Activated T-helper 2 cell treated with anti-CD3 and anti-CD28 coated beads, Interferon-gamma antibody, Interleukin-2, Interleukin-4, amounts not matched to agents 10 μg/mL and 5 μg/mL and 100 μg/mL, durations not matched to agents 14 hours and 24 hours and 36 hours (primary cell): ENCODE measurements at regions of chr9 and their contacts with region 1.

Region 1: DNA sequence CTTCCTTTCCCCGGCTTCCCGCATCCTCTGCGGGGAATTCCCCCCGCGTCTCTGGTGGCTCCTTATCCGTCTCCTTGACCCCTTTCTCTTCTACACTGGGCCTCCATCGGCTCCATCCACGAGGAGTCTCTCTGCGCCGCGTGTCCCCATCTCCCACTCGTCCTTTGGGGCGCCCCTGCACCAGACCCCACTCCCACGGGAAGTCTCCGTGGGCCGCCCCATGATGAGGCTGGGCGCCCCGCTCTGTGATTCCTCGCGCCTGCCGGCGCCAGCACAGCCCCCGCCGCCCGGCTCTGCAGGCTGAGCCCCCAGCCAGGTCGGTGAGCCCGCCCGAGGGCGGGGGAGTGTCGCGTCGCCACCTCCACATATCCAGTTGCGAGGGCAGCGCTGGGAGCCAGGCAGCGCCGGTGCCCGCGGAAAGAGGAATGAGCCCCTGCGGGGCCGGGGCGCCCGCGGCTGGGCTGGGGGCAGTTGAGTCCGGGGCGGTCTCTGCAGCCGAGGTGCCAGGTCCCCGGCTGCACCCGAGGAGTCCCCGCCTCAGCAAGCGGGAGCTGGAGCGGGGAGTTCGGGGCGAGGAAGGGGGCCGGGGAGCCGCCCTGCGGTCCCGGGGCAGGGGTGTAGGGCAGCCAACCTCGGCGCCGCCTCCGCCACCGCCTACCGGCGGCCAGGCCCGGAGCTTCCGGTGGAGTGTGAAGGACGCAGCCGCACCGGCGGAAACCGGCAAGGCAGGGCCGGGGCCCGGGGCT is 2.1 kb upstream of the TRAF1 start:
- DNase-seq: peak; percentile 81
- H3K4me3 Mint-ChIP-seq: peak overlapping the region; percentile 92
- H3K27ac Mint-ChIP-seq: peak overlapping the region; percentile 98
- H3K4me1 Mint-ChIP-seq: peaks cover 67% of the 10 kb centered on the region
- H3K27me3 Mint-ChIP-seq: no peaks in the 10 kb centered on the region

Region 2: DNA sequence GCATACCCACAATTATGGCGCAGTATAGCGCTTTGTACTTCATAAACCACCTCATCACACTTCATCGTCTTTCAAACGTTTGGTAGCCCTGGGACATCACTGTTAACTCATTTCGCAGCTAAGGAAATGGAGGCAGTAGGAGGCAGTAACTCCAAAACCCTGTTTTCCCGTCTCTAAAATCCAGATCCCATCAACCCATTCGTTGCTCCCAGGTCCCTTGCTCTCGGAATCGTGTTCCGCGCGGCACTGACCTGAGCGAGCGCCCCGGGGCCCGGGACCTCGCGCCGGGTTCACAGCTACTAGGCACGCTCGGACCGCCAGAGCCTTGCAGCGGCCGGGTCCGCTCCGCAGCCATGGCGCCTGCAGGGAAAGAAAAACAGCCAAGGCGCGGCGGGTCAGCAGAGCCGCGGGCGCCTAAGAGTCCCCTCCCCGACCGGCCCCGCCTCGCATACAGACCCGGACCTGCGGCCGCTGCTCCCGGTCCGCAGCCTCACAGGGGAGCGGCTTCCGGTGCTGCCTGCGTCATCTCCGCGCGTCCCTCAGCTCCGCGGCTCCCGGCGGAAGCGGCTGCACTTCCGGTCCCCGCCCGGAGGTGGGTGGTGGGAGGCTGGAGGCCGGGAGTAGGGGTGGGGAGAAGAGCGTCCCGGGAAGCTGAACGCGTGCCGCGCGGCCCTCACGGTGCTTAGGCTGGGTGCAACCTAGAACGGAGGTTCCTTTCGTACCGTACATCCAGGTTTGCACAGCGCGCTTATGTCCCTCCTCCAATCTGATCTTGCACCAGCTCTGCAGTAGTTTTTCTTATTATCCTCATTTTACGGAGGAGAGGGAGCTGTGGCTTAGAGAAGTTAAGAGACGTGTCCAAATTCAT is 135.5 kb before region 1 on chr9 and contains the start of gene FBXW2:
- intact Hi-C with region 1: loop called (anchors 5 kb)
- DNase-seq: peak; percentile 86
- H3K4me3 Mint-ChIP-seq: peak within 1 kb of the TSS; percentile 87
- H3K27ac Mint-ChIP-seq: peak within 1 kb of the TSS; percentile 91
- H3K4me1 Mint-ChIP-seq: peaks cover 40% of the 10 kb centered on the region
- H3K27me3 Mint-ChIP-seq: no peaks in the 10 kb centered on the region
- total RNA-seq, gene FBXW2: 79.7 and 80.2 TPM in 2 replicates

Region 3: GRCh38 chr9:120875954-120876841 is 52.5 kb before region 1 on chr9:
- intact Hi-C with region 1: loop called (anchors 1 kb)
- DNase-seq: peak; percentile 90
- H3K4me3 Mint-ChIP-seq: peak overlapping the region; percentile 87
- H3K27ac Mint-ChIP-seq: peak overlapping the region; percentile 93
- H3K4me1 Mint-ChIP-seq: peaks cover 72% of the 10 kb centered on the region
- H3K27me3 Mint-ChIP-seq: no peaks in the 10 kb centered on the region

Region 4: GRCh38 chr9:120909904-120910303 is 18.8 kb before region 1 on chr9:
- intact Hi-C with region 1: loop called (anchors 2 kb)
- DNase-seq: no peak
- H3K4me3 Mint-ChIP-seq: no peak overlapping the region
- H3K27ac Mint-ChIP-seq: peak overlapping the region; percentile 82
- H3K4me1 Mint-ChIP-seq: peaks cover 83% of the 10 kb centered on the region
- H3K27me3 Mint-ChIP-seq: no peaks in the 10 kb centered on the region

Region 5: DNA sequence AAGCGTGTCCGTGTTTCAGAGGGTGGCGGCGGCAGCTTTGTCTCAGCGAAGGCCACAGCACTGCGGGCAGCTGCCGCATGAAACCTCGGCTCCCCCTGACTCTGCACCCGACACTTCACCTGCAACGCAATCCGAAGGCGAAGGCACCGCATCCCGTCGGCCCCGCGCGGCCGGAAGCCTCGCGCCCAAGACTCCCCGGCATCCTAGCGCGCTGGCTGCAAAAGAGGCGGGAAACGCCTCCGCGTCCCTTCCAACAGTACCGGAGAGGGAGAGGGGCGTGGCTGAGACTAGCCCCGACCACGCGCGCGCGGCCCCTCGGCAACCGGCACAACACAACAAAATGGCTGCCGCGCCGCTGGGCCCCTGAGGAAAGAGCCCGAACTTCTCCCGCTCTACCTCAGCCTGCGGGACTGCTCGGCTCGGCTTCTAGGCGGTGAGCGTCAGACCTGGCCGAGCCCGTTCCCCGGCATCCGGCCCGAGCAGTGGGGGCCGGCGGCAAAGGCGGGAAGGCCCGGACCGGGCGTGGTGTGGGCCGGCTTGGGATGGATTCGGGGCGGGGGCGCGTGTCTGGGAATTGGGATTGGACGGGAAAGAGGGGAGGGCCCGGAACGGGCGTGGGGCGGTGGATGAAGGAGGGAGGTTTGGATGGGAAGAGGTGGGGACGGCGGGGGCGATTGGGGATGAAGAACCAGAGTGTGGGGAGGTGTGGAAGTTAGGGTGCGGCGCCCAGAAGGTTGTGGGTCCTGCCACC is 146.2 kb after region 1 on chr9 and contains the start of gene CNTRL:
- intact Hi-C with region 1: loop called (anchors 2 kb)
- DNase-seq: peak; percentile 90
- H3K4me3 Mint-ChIP-seq: peak within 1 kb of the TSS; percentile 100
- H3K27ac Mint-ChIP-seq: peak within 1 kb of the TSS; percentile 98
- H3K4me1 Mint-ChIP-seq: peaks cover 34% of the 10 kb centered on the region
- H3K27me3 Mint-ChIP-seq: no peaks in the 10 kb centered on the region
- total RNA-seq, gene CNTRL: 67.6 and 68.4 TPM in 2 replicates